Endothelial cell of umbilical vein (primary cell): ENCODE measurements at regions of chr13 and their contacts with region 1.

Region 1: GRCh38 chr13:99356158-99357091 is 49.2 kb upstream of the GPR183 start:
- DNase-seq: peak; percentile 94
- H3K4me3 ChIP-seq: peak overlapping the region in 1 of 3 experiments; percentile 15
- H3K27ac ChIP-seq: peak overlapping the region; percentile 97
- H3K4me1 ChIP-seq: peaks cover 24% of the 10 kb centered on the region
- H3K27me3 ChIP-seq: no peaks in the 10 kb centered on the region
- CTCF ChIP-seq: no peak
- POLR2A ChIP-seq: no peak

Region 2: GRCh38 chr13:99312493-99312883 is 43.9 kb before region 1 on chr13:
- CTCF ChIA-PET with region 1: no interaction called
- POLR2A ChIA-PET with region 1: no interaction called
- dilution Hi-C with region 1: no loop called
- intact Hi-C with region 1: loop called (anchors 1 kb)
- DNase-seq: no peak
- H3K4me3 ChIP-seq: no peak overlapping the region
- H3K27ac ChIP-seq: peak overlapping the region; percentile 1
- H3K4me1 ChIP-seq: peaks cover 39% of the 10 kb centered on the region
- H3K27me3 ChIP-seq: no peaks in the 10 kb centered on the region
- CTCF ChIP-seq: no peak
- POLR2A ChIP-seq: no peak

Region 3: GRCh38 chr13:99320693-99321481 is 35.5 kb before region 1 on chr13:
- CTCF ChIA-PET with region 1: interaction called, 4 read pairs
- POLR2A ChIA-PET with region 1: no interaction called
- dilution Hi-C with region 1: no loop called
- intact Hi-C with region 1: loop called (anchors 1 kb)
- DNase-seq: peak; percentile 93
- H3K4me3 ChIP-seq: no peak overlapping the region
- H3K27ac ChIP-seq: peak overlapping the region; percentile 77
- H3K4me1 ChIP-seq: peaks cover 16% of the 10 kb centered on the region
- H3K27me3 ChIP-seq: no peaks in the 10 kb centered on the region
- CTCF ChIP-seq: no peak
- POLR2A ChIP-seq: no peak

Region 4: GRCh38 chr13:99393791-99394735 is 37.6 kb after region 1 on chr13:
- CTCF ChIA-PET with region 1: no interaction called
- POLR2A ChIA-PET with region 1: no interaction called
- dilution Hi-C with region 1: no loop called
- intact Hi-C with region 1: no loop called
- DNase-seq: no peak
- H3K4me3 ChIP-seq: no peak overlapping the region
- H3K27ac ChIP-seq: no peak overlapping the region
- H3K4me1 ChIP-seq: no peaks in the 10 kb centered on the region
- H3K27me3 ChIP-seq: no peaks in the 10 kb centered on the region
- CTCF ChIP-seq: no peak
- POLR2A ChIP-seq: no peak

Region 5: DNA sequence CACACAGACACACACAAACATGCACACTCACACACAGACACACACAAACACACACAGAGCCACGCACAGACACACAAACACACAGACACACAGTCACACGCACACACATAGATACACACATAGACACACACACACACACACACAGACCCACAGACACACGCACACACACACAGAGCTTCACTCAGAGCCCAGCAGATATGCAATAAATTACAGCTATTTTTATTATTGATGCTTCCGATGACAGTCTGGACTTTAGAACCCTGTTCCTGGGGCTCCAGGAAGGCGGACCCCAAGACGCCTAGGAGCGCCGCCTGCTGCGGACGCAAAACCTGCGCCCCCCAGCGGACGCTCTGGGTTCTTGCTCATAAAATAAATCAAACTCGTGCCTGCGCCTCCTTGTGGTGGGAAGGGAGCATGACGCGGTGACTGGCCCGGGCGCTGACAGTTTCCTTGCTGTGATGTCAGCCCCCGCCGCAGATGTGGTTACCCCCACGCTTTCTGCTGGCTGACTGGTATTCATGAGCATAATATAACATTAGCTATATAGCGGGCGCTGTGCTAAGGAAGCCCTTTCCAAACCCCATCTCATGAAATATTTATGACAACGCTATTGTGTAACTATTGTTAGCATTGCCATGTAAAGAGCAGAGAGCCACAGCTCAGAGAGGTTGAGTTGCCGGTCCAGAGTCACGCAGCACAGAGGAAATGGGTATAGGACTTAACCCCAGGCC is 80.4 kb after region 1 on chr13:
- CTCF ChIA-PET with region 1: interaction called, 3 read pairs
- POLR2A ChIA-PET with region 1: no interaction called
- dilution Hi-C with region 1: no loop called
- intact Hi-C with region 1: loop called (anchors 1 kb)
- DNase-seq: peak; percentile 84
- H3K4me3 ChIP-seq: no peak overlapping the region
- H3K27ac ChIP-seq: no peak overlapping the region
- H3K4me1 ChIP-seq: peaks cover 9% of the 10 kb centered on the region
- H3K27me3 ChIP-seq: peaks cover 13 to 29% of the 10 kb centered on the region in 2 experiments
- CTCF ChIP-seq: peak; percentile 100
- POLR2A ChIP-seq: no peak